ENCODE measurements at regions of chr3 and their contacts with region 1.

Region 1: GRCh38 chr3:20225769-20226168 is 39.8 kb upstream of the SGO1 start:
- DNase-seq: peak; percentile 81
- H3K4me3 ChIP-seq: no peak overlapping the region
- H3K27ac ChIP-seq: no peak overlapping the region
- H3K4me1 ChIP-seq: no peaks in the 10 kb centered on the region
- H3K27me3 ChIP-seq: no peaks in the 10 kb centered on the region
- CTCF ChIP-seq: peak; percentile 35 to 48
- POLR2A ChIP-seq: no peak

Region 2: GRCh38 chr3:20173844-20174410 is 51.8 kb before region 1 on chr3:
- CTCF ChIA-PET with region 1: no interaction called
- POLR2A ChIA-PET with region 1: no interaction called
- dilution Hi-C with region 1: no loop called
- intact Hi-C with region 1: no loop called
- DNase-seq: no peak
- H3K4me3 ChIP-seq: no peak overlapping the region
- H3K27ac ChIP-seq: no peak overlapping the region
- H3K4me1 ChIP-seq: no peaks in the 10 kb centered on the region
- H3K27me3 ChIP-seq: no peaks in the 10 kb centered on the region
- CTCF ChIP-seq: no peak
- POLR2A ChIP-seq: no peak

Region 3: DNA sequence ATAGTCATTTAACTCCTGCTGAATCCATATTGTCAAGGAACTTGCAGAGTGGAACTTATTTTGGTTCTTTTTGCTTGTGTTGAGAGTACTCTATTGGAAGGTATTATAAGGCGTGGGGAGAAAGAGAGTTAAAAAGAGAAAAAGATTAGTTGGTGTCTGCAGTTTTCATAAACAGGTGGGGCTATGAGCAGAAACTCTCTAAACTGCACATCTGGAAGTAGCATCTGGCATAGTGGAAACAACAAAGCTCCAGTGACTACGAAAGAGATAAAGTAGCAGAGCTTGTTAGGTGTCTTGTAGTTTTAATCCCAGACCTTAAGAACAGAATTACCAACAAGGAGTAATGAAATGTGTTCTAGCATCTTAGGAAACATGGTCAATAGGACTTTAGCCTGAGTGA is 109.1 kb after region 1 on chr3:
- CTCF ChIA-PET with region 1: interaction called, 13 read pairs
- POLR2A ChIA-PET with region 1: no interaction called
- dilution Hi-C with region 1: no loop called
- intact Hi-C with region 1: loop called (anchors 1 kb)
- DNase-seq: no peak
- H3K4me3 ChIP-seq: no peak overlapping the region
- H3K27ac ChIP-seq: no peak overlapping the region
- H3K4me1 ChIP-seq: no peaks in the 10 kb centered on the region
- H3K27me3 ChIP-seq: no peaks in the 10 kb centered on the region
- CTCF ChIP-seq: no peak
- POLR2A ChIP-seq: no peak

Region 4: DNA sequence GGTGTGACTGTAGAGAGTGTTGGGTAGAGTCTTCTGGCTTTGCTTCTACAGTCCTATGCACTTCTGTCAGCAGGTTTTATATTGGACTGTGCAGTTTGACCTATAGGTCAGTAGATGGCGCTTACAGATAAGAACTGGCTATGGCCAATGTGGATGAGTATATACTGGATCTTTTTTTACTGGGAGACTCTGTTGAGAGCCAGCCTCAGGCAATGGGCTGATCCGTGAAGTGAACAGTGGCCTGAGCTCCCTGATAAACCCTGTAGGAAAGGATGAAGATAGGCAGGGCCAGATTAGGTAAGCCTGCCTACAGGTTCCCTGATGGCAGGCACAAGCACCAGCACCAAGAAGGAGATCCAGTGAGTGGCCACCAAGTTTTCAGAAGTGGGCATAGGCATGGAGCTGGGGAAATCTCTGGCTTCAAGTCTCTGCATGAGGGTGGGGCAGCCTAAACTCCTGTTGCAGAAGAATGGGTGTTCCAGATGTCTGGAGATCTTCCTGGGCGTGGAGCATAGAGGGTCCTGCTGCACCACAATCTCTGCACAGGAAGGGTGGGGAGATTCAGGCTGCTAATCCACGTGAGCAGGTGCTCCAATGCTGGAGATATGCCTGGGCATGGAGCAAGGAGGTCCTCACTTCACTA is 286.2 kb after region 1 on chr3:
- CTCF ChIA-PET with region 1: interaction called, 15 read pairs
- POLR2A ChIA-PET with region 1: no interaction called
- dilution Hi-C with region 1: no loop called
- intact Hi-C with region 1: loop called (anchors 2 kb)
- DNase-seq: peak; percentile 51
- H3K4me3 ChIP-seq: no peak overlapping the region
- H3K27ac ChIP-seq: no peak overlapping the region
- H3K4me1 ChIP-seq: no peaks in the 10 kb centered on the region
- H3K27me3 ChIP-seq: no peaks in the 10 kb centered on the region
- CTCF ChIP-seq: peak; percentile 35 to 40
- POLR2A ChIP-seq: no peak

Region 5: GRCh38 chr3:20930034-20930433 is 704.3 kb after region 1 on chr3:
- CTCF ChIA-PET with region 1: no interaction called
- POLR2A ChIA-PET with region 1: no interaction called
- dilution Hi-C with region 1: no loop called
- intact Hi-C with region 1: loop called (anchors 5 kb)
- DNase-seq: peak; percentile 5
- H3K4me3 ChIP-seq: no peak overlapping the region
- H3K27ac ChIP-seq: no peak overlapping the region
- H3K4me1 ChIP-seq: no peaks in the 10 kb centered on the region
- H3K27me3 ChIP-seq: no peaks in the 10 kb centered on the region
- CTCF ChIP-seq: no peak
- POLR2A ChIP-seq: no peak

Region 6: GRCh38 chr3:21894459-21895340 is 1668.9 kb after region 1 on chr3:
- CTCF ChIA-PET with region 1: interaction called, 30 read pairs
- POLR2A ChIA-PET with region 1: no interaction called
- dilution Hi-C with region 1: no loop called
- intact Hi-C with region 1: loop called (anchors 1 kb)
- DNase-seq: peak; percentile 17
- H3K4me3 ChIP-seq: no peak overlapping the region
- H3K27ac ChIP-seq: no peak overlapping the region
- H3K4me1 ChIP-seq: no peaks in the 10 kb centered on the region
- H3K27me3 ChIP-seq: no peaks in the 10 kb centered on the region
- CTCF ChIP-seq: peak in 1 of 2 donors; percentile 10
- POLR2A ChIP-seq: no peak